ENCODE measurements at regions of chr2 and their contacts with region 1.

Region 1: GRCh38 chr2:150528861-150529801 is 41.7 kb upstream of the RND3 start:
- DNase-seq: peak; percentile 45
- ATAC-seq: peak; percentile 96
- H3K4me3 ChIP-seq: no peak overlapping the region
- H3K27ac ChIP-seq: no peak overlapping the region
- H3K4me1 ChIP-seq: no peaks in the 10 kb centered on the region; the same call in 1 of the 2 replicates
- H3K27me3 ChIP-seq: no peaks in the 10 kb centered on the region
- CTCF ChIP-seq: no peak
- EP300 ChIP-seq: no peak; a peak in 1 of 4 replicates
- POLR2A ChIP-seq: no peak
- RAD21 ChIP-seq: no peak

Region 2: GRCh38 chr2:150478200-150478974 is 50.7 kb before region 1 on chr2:
- CTCF ChIA-PET with region 1: interaction called, 4 read pairs
- POLR2A ChIA-PET with region 1: interaction called, 6 read pairs
- RAD21 ChIA-PET with region 1: interaction called, 9 read pairs
- SMC1A ChIA-PET with region 1: interaction called, 30 read pairs
- in situ Hi-C with region 1: no loop called
- intact Hi-C with region 1: no loop called
- DNase-seq: no peak
- ATAC-seq: peak; percentile 16
- H3K4me3 ChIP-seq: no peak overlapping the region
- H3K27ac ChIP-seq: no peak overlapping the region
- H3K4me1 ChIP-seq: no peaks in the 10 kb centered on the region
- H3K27me3 ChIP-seq: no peaks in the 10 kb centered on the region; a peak in 1 of 4 replicates
- CTCF ChIP-seq: no peak
- EP300 ChIP-seq: no peak
- POLR2A ChIP-seq: no peak
- RAD21 ChIP-seq: no peak

Region 3: DNA sequence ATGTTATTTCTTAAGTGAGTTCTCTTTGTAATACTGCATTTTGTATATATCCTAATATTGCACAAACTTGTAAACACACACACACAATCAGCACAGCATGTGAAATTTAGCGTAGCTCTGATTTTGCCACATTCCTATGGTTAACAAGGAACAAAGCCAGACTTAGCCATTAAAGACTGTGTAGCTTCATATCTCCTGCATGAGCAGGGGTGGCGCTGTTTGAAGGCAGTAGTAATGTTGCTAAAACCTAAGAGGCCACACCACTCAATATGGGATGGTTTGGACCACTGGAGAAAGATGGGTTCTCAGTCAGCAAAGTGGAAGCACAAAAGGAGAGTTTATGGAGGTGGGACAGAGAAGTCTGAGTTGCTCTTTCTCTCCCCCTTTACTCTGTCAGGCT is 19.4 kb after region 1 on chr2:
- CTCF ChIA-PET with region 1: interaction called, 16 read pairs
- POLR2A ChIA-PET with region 1: interaction called, 4 read pairs
- RAD21 ChIA-PET with region 1: interaction called, 8 read pairs
- SMC1A ChIA-PET with region 1: interaction called, 64 read pairs
- in situ Hi-C with region 1: no loop called
- intact Hi-C with region 1: no loop called
- DNase-seq: no peak
- ATAC-seq: peak; percentile 80
- H3K4me3 ChIP-seq: no peak overlapping the region
- H3K27ac ChIP-seq: no peak overlapping the region
- H3K4me1 ChIP-seq: no peaks in the 10 kb centered on the region
- H3K27me3 ChIP-seq: no peaks in the 10 kb centered on the region
- CTCF ChIP-seq: peak; percentile 38 to 41 (median 38); a peak in 4 of 6 replicates
- EP300 ChIP-seq: no peak
- POLR2A ChIP-seq: no peak
- RAD21 ChIP-seq: 0 out of 2 replicates have a peak, but pooled peaks have one; percentile 6

Region 4: DNA sequence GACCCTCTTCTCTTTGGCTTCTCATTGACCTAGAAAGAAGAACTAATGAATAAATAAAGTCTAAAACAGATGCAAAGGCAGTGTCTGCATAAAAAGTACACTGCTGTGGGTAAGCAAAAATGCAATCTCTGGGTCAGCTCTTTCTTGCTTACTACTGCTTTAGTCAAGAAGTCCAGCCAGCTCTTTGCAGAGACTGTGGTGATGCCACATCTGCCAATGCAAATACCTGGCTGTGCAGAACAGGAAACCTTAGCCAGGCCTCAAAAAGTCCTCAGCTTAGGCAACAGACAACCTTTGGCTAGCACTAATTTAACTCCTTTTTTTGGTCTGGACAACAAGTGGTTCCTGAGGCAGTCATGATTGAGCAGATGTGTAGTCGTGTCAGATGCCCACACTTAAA is 31.9 kb after region 1 on chr2:
- CTCF ChIA-PET with region 1: interaction called, 6 read pairs
- POLR2A ChIA-PET with region 1: interaction called, 6 read pairs
- RAD21 ChIA-PET with region 1: interaction called, 11 read pairs
- SMC1A ChIA-PET with region 1: interaction called, 64 read pairs
- in situ Hi-C with region 1: no loop called
- intact Hi-C with region 1: no loop called
- DNase-seq: no peak
- ATAC-seq: peak; percentile 25; the same call in 2 of the 3 replicates
- H3K4me3 ChIP-seq: no peak overlapping the region
- H3K27ac ChIP-seq: no peak overlapping the region
- H3K4me1 ChIP-seq: no peaks in the 10 kb centered on the region
- H3K27me3 ChIP-seq: no peaks in the 10 kb centered on the region
- CTCF ChIP-seq: no peak
- EP300 ChIP-seq: no peak
- POLR2A ChIP-seq: no peak
- RAD21 ChIP-seq: no peak

Region 5: DNA sequence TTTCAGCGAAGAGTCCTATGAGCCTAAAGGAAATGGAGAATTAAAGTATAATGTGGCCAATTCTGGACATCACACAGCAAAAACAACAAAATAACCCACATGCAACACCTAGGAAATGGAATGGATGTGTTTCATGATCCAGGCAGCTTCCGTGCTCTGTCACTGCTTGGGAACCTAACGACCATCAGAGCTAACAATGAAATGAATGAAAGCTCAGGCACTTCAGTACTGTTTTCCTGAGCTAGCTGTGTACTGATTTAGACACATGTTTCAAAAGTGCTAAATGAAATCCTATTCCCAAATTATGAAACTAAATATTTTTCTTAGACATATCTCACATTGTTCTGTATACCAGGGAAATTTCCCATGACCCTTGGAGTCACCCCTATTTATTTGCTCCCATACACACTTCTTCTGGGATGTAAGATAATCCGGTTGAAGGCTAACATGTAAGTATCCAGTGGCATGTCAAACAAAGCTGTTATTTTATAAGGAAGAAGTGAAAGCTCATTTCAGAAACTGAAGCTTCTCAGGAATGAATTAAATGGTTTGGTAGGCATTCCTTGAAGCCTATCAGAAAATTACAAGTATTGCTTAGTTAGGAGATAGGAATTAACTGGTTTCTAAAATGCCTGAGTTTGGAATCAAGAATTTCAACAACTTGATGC is 66.8 kb after region 1 on chr2:
- CTCF ChIA-PET with region 1: interaction called, 29 read pairs
- POLR2A ChIA-PET with region 1: interaction called, 4 read pairs
- RAD21 ChIA-PET with region 1: interaction called, 40 read pairs
- SMC1A ChIA-PET with region 1: interaction called, 49 read pairs
- in situ Hi-C with region 1: no loop called
- intact Hi-C with region 1: no loop called
- DNase-seq: no peak
- ATAC-seq: no peak
- H3K4me3 ChIP-seq: no peak overlapping the region
- H3K27ac ChIP-seq: no peak overlapping the region
- H3K4me1 ChIP-seq: no peaks in the 10 kb centered on the region
- H3K27me3 ChIP-seq: no peaks in the 10 kb centered on the region
- CTCF ChIP-seq: no peak
- EP300 ChIP-seq: no peak
- POLR2A ChIP-seq: no peak
- RAD21 ChIP-seq: no peak